ENCODE measurements at regions of chr14 and their contacts with region 1.

Region 1: DNA sequence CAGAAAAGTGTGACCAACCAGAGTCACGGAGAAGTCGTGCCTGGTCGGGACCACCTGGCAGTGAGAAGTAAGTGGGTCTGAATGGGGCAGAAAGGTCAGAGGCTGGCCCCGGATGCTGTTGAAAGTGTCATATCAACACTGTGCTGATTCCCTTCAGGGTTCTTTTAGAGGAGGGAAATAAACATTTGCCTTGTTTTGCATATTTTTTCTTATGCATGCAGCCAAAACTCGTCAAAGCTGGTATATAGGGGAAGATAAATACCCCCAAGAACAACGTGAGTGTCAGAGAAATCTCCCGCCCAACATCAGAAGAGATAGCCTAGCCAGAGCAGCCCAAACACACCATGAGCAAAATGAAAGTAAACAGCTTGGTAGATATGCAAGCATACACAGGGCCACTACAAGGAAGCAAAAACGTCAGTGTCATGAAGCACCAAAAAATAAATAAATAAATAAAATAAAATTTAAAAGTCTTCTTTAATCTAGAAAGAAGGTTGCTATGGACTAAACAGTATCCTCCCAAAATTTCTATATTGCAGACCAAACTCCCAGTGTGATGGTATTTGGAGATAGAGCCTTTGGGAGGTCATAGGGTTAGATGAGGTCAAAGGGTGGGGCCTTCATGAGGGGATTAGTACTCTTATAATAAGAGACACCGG is 22.1 kb downstream of the EIF5 start:
- DNase-seq: no peak
- H3K4me3 Mint-ChIP-seq: no peak overlapping the region
- H3K27ac Mint-ChIP-seq: no peak overlapping the region
- H3K4me1 Mint-ChIP-seq: peaks cover 9% of the 10 kb centered on the region
- H3K27me3 Mint-ChIP-seq: no peaks in the 10 kb centered on the region
- CTCF ChIP-seq: no peak

Region 2: DNA sequence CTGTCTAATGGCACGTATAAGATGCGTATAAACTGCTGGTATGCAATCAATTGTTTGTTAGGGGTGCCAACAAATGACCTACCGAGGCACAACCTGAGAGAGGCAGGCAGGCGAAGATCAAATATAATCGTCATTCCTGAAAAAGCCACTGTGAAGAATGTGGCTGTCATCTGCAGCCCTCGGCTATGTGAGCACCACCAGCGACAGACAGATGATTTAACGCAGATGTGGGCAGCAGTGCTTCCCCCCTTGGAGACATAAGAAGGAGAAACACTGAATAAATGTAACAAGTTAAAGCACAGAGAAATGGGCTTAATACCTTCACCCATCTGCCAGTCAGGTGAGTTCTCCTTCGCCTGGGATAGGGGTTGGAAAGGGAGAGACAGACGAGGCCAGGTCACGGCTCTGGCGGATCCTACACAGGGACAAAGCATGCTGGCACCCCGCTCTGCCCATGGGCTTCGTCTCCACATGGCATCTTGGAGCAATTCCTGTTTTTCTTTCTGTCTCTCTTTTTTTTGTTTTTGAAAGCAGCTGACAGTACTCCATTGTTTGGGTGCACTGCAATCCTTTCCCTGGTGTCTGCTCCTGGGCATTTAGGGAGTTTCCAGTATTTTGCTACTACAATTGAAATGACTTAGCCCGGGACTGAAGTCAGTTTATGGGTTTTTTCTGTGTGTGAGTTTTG is 204.8 kb before region 1 on chr14:
- CTCF ChIA-PET with region 1: interaction called, 10 read pairs
- intact Hi-C with region 1: no loop called
- DNase-seq: no peak
- H3K4me3 Mint-ChIP-seq: no peak overlapping the region
- H3K27ac Mint-ChIP-seq: no peak overlapping the region
- H3K4me1 Mint-ChIP-seq: peaks cover 7% of the 10 kb centered on the region
- H3K27me3 Mint-ChIP-seq: no peaks in the 10 kb centered on the region
- CTCF ChIP-seq: no peak

Region 3: GRCh38 chr14:103456167-103456835 is 100.1 kb after region 1 on chr14:
- CTCF ChIA-PET with region 1: no interaction called
- intact Hi-C with region 1: no loop called
- DNase-seq: no peak
- H3K4me3 Mint-ChIP-seq: no peak overlapping the region
- H3K27ac Mint-ChIP-seq: no peak overlapping the region
- H3K4me1 Mint-ChIP-seq: peaks cover 8% of the 10 kb centered on the region
- H3K27me3 Mint-ChIP-seq: no peaks in the 10 kb centered on the region
- CTCF ChIP-seq: no peak

Region 4: DNA sequence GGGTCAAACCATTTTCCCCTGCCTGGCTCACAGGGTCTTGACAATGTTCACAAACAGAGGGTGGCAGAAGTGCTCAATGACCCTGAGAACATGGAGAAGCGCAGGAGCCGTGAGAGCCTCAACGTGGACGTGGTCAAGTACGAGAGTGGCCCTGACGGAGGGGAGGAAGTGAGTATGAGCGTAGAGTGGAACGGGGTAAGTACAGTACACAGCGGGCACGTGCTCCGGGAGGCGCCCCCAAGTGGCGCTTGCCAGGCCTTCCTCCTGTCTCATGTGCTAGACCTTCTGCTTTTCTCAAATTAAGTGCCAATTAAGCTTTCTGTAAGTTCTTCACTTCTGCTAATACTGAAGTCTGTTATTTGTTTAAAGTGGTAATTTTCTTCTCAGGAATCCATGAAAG is 323.2 kb after region 1 on chr14:
- CTCF ChIA-PET with region 1: no interaction called
- intact Hi-C with region 1: no loop called
- DNase-seq: peak; percentile 24
- H3K4me3 Mint-ChIP-seq: no peak overlapping the region
- H3K27ac Mint-ChIP-seq: no peak overlapping the region
- H3K4me1 Mint-ChIP-seq: no peaks in the 10 kb centered on the region
- H3K27me3 Mint-ChIP-seq: no peaks in the 10 kb centered on the region
- CTCF ChIP-seq: peak; percentile 39